Activated T-helper 2 cell treated with anti-CD3 and anti-CD28 coated beads, Interferon-gamma antibody, Interleukin-2, Interleukin-4, amounts not matched to agents 10 μg/mL and 5 μg/mL and 100 μg/mL, durations not matched to agents 14 hours and 24 hours and 36 hours (primary cell): ENCODE measurements at regions of chr19 and their contacts with region 1.

Region 1: DNA sequence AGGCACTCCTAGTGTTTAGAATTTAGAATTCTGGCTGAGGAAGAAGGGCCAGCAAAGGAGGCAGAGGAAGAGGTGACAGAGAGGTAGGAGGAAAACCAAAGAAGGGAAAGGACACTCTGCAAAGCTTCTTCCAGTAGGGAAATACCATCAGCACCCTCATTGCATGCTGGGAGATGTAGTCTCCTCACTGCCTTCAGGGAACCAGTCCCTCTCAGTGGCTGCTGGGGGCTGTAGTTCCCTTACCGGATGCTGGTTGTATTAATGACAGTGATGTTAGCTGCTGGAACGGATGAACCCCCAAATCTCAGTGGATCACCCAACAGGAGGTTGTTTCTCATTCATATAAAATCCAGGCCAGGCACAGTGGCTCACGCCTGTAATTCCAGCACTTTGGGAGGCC is 10.1 kb downstream of the GRIN2D start:
- DNase-seq: no peak
- H3K4me3 Mint-ChIP-seq: no peak overlapping the region
- H3K27ac Mint-ChIP-seq: no peak overlapping the region
- H3K4me1 Mint-ChIP-seq: peaks cover 13% of the 10 kb centered on the region
- H3K27me3 Mint-ChIP-seq: peaks cover 12% of the 10 kb centered on the region

Region 2: DNA sequence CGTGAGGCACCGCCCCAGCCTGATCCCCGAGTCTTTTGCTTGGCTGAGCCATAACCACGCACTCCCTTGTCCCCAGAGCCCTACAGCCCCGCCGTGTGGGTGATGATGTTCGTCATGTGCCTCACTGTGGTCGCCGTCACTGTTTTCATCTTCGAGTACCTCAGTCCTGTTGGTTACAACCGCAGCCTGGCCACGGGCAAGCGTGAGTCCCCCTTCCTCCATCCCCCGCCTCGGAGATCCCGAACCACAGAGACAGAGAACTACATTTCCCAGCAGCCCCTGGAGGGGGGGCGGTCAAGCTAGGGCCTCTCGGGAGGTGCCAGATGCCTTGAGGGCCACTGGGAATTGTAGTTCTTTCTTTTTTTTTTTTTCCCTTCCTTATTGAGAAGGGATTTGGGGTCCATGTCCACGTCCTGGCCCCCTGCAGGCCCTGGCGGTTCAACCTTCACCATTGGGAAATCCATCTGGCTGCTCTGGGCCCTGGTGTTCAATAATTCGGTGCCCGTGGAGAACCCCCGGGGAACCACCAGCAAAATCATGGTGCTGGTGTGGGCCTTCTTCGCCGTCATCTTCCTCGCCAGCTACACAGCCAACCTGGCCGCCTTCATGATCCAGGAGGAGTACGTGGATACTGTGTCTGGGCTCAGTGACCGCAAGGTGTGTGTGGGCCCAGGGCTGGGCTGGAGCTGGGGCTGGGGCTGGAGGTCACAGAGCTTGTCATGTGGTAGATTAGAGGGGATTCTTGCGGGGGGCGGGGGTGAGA is 15.7 kb after region 1 on chr19:
- intact Hi-C with region 1: loop called (anchors 2 kb)
- DNase-seq: peak; percentile 67
- H3K4me3 Mint-ChIP-seq: peak overlapping the region; percentile 67
- H3K27ac Mint-ChIP-seq: peak overlapping the region; percentile 93
- H3K4me1 Mint-ChIP-seq: peaks cover 20% of the 10 kb centered on the region
- H3K27me3 Mint-ChIP-seq: peaks cover 10% of the 10 kb centered on the region